PC-9 (cell line): ENCODE measurements at regions of chr4 and their contacts with region 1.

Region 1: DNA sequence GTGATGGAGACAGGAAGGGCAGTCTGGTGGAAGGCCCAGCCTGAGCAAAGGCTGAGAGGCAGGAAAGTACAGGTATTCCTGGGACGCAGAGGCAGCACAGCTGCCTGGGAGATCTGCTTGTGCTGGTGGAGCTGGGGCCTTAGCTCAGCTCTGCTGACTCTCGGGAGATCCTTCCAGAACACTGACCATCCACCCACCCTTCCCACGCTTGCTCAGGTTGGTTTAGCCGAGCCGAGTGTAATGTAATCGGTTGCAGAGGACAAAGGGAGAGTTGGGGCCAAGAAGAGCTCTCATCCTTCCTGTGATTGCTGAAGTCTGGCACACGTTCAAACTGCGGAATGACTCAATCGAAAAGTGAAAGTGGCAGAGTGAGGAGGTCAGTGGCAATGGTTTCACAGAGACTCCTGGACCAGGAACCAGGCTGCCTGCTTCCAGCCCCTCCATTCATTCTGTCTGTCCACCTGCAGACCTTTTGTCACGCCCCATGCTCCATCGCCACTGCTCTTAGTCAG is 43.1 kb upstream of the GPR78 start:
- DNase-seq: peak; percentile 80 to 86
- H3K4me3 ChIP-seq: no peak overlapping the region
- H3K27ac ChIP-seq: peak overlapping the region; percentile 86
- H3K4me1 ChIP-seq: peaks cover 85% of the 10 kb centered on the region
- H3K27me3 ChIP-seq: no peaks in the 10 kb centered on the region
- CTCF ChIP-seq: no peak

Region 2: GRCh38 chr4:8428293-8429097 is 108.6 kb before region 1 on chr4:
- CTCF ChIA-PET with region 1: no interaction called
- POLR2A ChIA-PET with region 1: no interaction called
- intact Hi-C with region 1: loop called (anchors 5 kb)
- DNase-seq: peak; percentile 76 to 96
- H3K4me3 ChIP-seq: peak overlapping the region; percentile 69
- H3K27ac ChIP-seq: no peak overlapping the region
- H3K4me1 ChIP-seq: peaks cover 8% of the 10 kb centered on the region; the same call in 1 of the 2 replicates
- H3K27me3 ChIP-seq: no peaks in the 10 kb centered on the region
- CTCF ChIP-seq: peak; percentile 57

Region 3: GRCh38 chr4:8468746-8469535 is 68.2 kb before region 1 on chr4:
- CTCF ChIA-PET with region 1: interaction called, 3 read pairs
- POLR2A ChIA-PET with region 1: no interaction called
- intact Hi-C with region 1: loop called (anchors 1 kb)
- DNase-seq: peak; percentile 46 to 72
- H3K4me3 ChIP-seq: no peak overlapping the region
- H3K27ac ChIP-seq: no peak overlapping the region
- H3K4me1 ChIP-seq: peaks cover 15% of the 10 kb centered on the region; the same call in 1 of the 2 replicates
- H3K27me3 ChIP-seq: no peaks in the 10 kb centered on the region
- CTCF ChIP-seq: peak; percentile 89

Region 4: GRCh38 chr4:8571702-8572596 is 34.9 kb after region 1 on chr4:
- CTCF ChIA-PET with region 1: no interaction called
- POLR2A ChIA-PET with region 1: no interaction called
- intact Hi-C with region 1: loop called (anchors 1 kb)
- DNase-seq: peak; percentile 77 to 81
- H3K4me3 ChIP-seq: no peak overlapping the region
- H3K27ac ChIP-seq: peak overlapping the region; percentile 52
- H3K4me1 ChIP-seq: peaks cover 49% of the 10 kb centered on the region
- H3K27me3 ChIP-seq: no peaks in the 10 kb centered on the region
- CTCF ChIP-seq: no peak